ENCODE measurements at regions of chr12 and their contacts with region 1.

Region 1: DNA sequence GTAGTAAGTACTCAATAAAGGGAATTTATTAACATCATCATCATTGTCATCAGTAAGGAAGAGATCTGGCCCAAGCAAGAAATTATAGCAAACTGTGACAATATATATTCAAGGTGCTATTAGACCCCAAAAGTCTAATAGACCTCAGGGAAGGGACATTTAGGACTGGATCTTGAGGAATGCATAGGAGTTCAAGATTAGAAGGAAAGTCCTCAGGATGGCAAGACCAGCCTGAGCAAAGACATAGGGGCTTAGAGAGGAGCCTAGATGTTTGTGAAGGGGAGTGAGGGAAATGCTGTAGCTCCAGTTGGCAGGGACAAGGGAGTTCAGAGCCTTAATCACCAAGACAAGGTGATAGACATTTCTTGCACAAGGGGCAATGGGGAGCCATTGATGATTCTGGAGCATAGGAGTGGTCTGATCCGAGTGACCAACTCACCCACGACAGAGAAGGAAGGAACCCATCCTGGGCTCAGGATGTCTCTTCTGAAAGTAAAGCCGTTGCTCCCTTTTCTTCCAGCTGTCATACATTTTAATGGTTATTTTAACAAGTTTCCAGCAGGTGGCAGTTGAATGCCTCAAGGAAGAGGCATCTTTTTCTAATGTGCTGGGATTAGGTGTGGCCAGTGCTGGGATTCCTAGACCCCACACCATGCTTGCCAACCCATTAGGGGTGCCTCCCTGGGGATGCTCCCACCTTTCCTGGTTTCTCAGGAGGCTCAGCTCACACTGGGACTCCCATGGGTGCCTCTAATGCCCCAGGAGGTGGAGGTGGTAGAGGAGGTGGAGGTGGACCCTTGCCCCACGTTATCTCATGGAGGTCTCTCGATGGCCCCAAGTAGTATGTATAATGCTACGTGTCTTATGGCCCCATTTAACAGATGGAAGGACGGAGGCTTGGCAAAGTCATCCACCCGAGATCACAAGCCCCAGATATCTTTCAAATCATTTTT is 37.8 kb downstream of the PHETA1 start:
- DNase-seq: no peak
- H3K4me3 ChIP-seq: no peak overlapping the region
- H3K4me3 Mint-ChIP-seq: no peak overlapping the region
- H3K27ac ChIP-seq: no peak overlapping the region
- H3K27ac Mint-ChIP-seq: no peak overlapping the region
- H3K4me1 ChIP-seq: no peaks in the 10 kb centered on the region
- H3K4me1 Mint-ChIP-seq: peaks cover 0 to 3% (median 0%) of the 10 kb centered on the region in 4 donors
- H3K27me3 ChIP-seq: no peaks in the 10 kb centered on the region
- H3K27me3 Mint-ChIP-seq: peaks cover 7 to 8% of the 10 kb centered on the region in 2 donors

Region 2: DNA sequence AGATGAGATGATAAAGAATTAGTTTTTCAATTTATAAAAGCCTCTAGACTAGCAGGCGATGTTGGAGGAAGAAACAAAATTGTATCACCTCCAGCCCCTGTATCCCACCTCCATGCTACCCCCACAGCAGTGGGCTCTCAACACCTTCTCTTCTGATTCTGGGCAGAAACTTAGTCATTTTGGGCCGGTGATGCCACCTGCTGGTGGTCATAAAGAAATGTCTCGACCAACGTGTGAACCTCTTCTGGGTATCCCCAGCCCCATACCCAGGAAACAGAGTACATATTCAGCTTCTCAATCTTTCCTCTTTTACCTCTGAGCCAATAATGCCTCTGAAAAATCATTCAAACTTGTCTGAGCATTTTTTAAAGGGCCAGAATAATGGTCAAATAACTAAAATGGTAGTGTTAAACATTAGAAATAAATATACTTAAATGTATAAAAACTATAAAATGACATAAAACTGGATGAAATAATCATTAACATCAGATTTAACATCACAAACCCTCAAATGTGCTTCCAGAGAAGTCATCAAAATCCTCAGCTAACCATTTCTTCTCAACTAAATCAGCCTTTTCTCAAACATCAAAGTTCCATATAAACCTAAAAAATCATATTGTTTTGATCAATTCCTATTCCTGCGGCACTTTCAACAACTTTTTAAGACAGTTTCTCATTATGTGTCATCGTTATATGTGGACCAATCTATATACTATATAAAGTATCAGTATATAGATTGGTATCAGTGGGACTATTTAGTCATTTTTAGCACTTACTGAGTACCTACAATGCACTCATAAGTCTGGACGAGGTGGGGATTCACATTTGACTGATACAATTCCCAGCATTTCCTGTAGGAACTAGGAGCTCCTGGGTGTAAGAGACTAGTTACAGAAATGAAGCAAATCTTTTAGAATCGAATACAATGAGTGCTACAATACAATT is 198.6 kb after region 1 on chr12:
- CTCF ChIA-PET with region 1: no interaction called
- POLR2A ChIA-PET with region 1: no interaction called
- intact Hi-C with region 1: loop called (anchors 1 kb)
- DNase-seq: peak; percentile 59 to 67 (median 61)
- H3K4me3 ChIP-seq: no peak overlapping the region
- H3K4me3 Mint-ChIP-seq: no peak overlapping the region
- H3K27ac ChIP-seq: no peak overlapping the region
- H3K27ac Mint-ChIP-seq: peak overlapping the region in 1 of 7 donors; percentile 19
- H3K4me1 ChIP-seq: no peaks in the 10 kb centered on the region
- H3K4me1 Mint-ChIP-seq: peaks cover 0 to 3% (median 1%) of the 10 kb centered on the region in 4 donors
- H3K27me3 ChIP-seq: no peaks in the 10 kb centered on the region
- H3K27me3 Mint-ChIP-seq: no peaks in the 10 kb centered on the region